ENCODE measurements at regions of chr17 and their contacts with region 1.

Region 1: DNA sequence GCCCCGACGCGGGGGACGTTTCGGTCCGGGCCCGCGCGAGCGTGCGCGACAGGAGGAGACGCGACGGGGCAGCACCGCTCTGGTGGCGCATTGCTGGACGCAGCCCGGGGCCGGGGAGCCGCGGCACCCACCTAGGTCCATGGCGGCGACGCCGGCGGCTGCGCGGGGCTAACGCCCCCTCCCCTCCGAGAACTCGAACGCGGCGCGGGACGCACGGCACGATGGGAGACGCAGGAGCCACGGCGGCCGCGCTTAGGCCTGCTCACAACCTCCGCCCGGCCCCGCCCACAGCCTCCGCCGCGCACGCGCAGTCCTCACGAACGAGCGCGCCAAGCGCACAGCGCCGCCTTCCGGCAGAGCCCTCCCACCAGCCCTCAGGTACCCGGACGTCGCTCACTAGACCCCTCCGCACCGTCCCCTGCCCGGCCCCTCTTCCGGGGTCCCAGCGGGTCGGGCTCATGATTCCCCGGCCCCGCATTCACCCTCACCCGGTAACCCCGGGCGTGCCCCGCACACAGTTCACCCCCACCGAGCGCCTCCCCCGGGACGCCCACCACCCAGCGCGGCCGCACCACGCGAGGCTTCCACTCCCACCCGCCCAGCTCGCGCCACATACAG is at the start of gene GEMIN4:
- DNase-seq: peak; percentile 92 to 97 (median 94)
- ATAC-seq: peak; percentile 78 to 93 (median 91)
- H3K4me3 ChIP-seq: peak within 1 kb of the TSS; percentile 61 to 94 (median 79)
- H3K27ac ChIP-seq: peak within 1 kb of the TSS; percentile 40 to 90 (median 81)
- H3K4me1 ChIP-seq: peaks cover 0 to 28% (median 13%) of the 10 kb centered on the region in 12 donors
- H3K27me3 ChIP-seq: no peaks in the 10 kb centered on the region
- CTCF ChIP-seq: peak; percentile 87 to 100 (median 96)
- POLR2A ChIP-seq: peak in 1 of 2 donors; percentile 60
- total RNA-seq, gene GEMIN4: 8.7 to 20.8 (median 10.7) TPM

Region 2: DNA sequence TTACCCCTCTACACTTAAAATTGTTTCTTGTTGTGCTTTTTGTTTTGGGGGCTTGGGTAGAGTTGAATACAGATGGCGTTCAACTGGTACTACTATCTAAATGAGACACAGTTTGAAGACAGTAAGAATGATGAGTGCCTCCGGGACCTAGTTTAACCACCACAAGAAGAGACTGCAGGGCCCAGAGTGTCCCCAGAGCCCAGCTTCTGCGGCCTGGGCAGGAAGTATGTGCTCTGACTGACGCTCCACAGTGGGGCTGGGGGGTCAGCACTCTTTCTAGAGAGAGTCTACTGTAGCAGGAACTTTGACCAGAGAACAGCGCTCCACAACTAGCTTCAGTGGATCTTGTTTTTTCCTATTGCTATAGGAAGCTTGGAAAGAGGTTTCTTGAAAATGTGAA is 211.5 kb before region 1 on chr17:
- intact Hi-C with region 1: no loop called
- DNase-seq: no peak
- ATAC-seq: no peak
- H3K4me3 ChIP-seq: no peak overlapping the region
- H3K27ac ChIP-seq: no peak overlapping the region
- H3K4me1 ChIP-seq: peaks cover 0 to 24% (median 0%) of the 10 kb centered on the region in 12 donors
- H3K27me3 ChIP-seq: no peaks in the 10 kb centered on the region
- CTCF ChIP-seq: no peak
- POLR2A ChIP-seq: no peak

Region 3: GRCh38 chr17:716238-716637 is 35.9 kb before region 1 on chr17:
- intact Hi-C with region 1: loop called in 1 of 10 experiments (anchors 2 kb)
- DNase-seq: no peak
- ATAC-seq: no peak
- H3K4me3 ChIP-seq: peak overlapping the region in 3 of 12 donors; percentile 81 to 94 (median 84)
- H3K27ac ChIP-seq: no peak overlapping the region
- H3K4me1 ChIP-seq: peaks cover 0 to 36% (median 22%) of the 10 kb centered on the region in 12 donors
- H3K27me3 ChIP-seq: no peaks in the 10 kb centered on the region
- CTCF ChIP-seq: no peak
- POLR2A ChIP-seq: no peak

Region 4: DNA sequence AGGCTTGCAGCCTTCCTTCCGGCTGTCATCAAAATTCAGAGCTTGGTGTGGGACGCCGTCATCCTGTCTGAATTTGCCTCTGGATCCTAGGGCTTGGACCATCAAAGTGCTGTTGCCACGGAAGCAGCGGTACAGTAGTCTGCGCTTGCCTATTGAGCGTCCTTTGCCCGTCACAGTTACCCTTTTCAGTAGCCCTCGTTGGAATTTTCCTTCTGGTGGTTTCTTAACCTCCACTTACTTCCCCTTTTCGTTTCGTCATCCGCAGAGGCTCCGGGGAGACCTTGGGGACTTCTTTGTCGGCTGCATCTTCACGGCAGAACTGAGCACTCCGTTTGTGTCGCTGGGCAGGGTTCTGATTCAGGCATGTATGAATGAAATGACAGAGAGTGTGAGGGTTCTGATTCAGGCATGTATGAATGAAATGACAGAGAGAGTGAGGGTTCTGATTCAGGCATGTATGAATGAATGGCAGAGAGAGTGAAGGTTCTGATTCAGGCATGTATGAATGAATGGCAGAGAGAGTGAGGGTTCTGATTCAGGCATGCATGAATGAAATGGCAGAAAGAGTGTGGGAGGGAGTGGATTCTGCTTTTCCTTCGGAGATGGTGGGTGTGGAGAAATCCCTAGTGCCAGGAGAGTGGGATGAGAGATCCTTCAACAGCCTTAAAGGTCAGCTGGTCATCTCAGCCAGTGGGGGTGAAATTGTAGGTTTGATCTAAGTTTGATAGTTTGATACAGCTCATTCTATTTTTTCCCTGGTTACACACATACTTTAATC is 11.7 kb before region 1 on chr17:
- intact Hi-C with region 1: no loop called
- DNase-seq: no peak
- ATAC-seq: peak in 2 of 4 donors; percentile 41 to 51
- H3K4me3 ChIP-seq: no peak overlapping the region
- H3K27ac ChIP-seq: no peak overlapping the region
- H3K4me1 ChIP-seq: peaks cover 0 to 12% (median 0%) of the 10 kb centered on the region in 12 donors
- H3K27me3 ChIP-seq: no peaks in the 10 kb centered on the region
- CTCF ChIP-seq: no peak
- POLR2A ChIP-seq: no peak

Measured in heart left ventricle (tissue), 16 donors.